ACHN (cell line): ENCODE measurements at regions of chr7 and their contacts with region 1.

Region 1: DNA sequence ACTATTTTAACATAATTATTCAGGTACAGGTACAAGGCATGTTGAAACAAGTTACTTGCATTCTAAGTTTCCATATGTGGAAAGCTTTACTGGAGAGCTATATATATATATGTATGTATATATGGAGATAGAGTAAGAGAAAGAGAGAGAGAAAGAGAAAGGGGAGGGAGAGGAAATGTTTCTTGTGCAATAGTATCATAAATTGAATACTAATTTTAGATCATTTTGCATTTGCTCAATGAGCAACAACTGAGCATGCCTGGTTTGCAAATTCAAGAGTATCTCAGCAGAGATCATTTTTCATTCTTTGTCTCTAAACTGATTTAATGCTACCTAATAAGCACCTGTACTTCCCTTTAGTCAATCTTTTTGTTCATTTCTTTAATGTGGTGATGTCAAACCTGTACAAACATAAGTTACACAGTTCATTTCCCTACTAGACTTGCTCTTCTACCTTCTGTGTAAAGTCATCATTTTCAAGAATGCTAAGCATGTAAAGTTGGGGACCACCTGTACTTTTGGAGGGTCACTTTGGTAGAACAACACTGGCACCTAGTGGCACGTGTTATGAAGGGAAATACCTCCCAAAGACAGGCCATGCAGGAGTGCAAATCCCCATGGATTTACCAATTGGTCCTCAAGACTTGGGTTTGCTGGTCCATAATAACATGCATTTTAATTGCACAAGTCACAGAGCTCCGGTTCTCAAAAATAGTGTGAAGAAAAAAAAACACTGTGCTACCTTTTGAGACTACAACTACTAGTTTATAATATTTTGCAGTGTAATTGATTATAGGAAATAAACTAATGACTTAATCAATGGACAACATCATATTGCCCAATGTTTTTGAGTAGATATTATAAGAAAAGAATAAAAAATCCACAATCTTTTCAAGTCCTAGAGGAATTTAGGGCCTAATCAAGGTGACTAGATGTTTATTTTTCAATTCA is 431.2 kb upstream of the IGFBP3 start:
- DNase-seq: peak; percentile 74

Region 2: DNA sequence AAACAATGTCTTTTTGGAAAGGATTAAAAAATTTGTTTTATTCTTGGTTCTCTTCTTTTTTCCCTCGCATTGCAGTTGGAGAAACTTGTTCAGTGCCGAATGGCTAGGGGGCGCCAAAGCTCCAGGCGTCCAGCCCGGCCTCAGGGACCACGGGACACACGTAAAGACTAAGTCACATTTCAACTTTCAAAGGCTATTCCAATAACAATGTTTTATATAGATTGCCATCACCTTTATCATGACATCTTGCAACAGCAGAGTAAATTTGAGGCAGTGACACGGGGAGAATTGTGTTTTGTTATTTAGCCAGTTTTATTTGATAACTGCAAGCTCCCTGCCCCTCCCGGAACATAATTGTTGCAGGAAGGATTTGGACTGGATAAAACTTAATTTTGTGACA is 429.0 kb before region 1 on chr7:
- in situ Hi-C with region 1: loop called (anchors 10 kb)
- DNase-seq: peak; percentile 77

Region 3: GRCh38 chr7:46282155-46282554 is 70.1 kb before region 1 on chr7:
- in situ Hi-C with region 1: no loop called
- DNase-seq: no peak

Region 4: DNA sequence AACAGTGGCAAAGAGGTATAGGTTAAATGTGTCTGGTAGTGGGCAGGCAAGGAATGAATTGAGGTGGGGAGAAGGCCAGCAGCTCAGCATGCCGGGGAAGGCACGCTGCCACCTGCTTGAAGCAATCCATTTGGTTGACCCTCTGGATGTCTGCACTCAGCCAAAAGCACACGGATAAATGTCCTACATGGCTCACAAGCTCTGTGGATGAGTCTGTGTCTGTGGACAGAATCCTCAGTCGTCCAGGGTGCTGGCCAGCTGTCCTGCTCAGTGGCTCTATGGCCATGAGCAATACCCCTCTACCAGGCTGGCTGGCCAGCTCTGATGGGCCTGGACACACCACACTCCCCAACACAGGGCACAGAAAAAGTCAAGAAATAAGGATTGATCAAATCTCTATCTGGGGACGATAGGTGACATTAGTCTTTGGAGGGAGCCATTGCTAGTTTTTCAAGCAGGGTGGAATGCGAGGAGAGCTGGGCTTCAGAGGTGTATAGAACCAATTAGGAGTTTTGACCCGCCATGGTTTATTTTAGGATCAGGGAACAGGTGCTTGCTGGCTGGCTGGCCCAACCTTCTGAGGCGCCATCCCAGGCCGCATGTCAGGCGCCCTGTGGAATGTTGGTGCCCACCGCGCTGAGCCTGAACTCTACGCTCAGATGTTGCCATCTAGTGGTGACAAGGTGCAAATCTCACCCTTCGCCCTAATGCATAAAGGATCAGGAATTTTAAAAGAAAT is 736.2 kb after region 1 on chr7:
- in situ Hi-C with region 1: loop called (anchors 25 kb)
- DNase-seq: peak; percentile 79

Region 5: DNA sequence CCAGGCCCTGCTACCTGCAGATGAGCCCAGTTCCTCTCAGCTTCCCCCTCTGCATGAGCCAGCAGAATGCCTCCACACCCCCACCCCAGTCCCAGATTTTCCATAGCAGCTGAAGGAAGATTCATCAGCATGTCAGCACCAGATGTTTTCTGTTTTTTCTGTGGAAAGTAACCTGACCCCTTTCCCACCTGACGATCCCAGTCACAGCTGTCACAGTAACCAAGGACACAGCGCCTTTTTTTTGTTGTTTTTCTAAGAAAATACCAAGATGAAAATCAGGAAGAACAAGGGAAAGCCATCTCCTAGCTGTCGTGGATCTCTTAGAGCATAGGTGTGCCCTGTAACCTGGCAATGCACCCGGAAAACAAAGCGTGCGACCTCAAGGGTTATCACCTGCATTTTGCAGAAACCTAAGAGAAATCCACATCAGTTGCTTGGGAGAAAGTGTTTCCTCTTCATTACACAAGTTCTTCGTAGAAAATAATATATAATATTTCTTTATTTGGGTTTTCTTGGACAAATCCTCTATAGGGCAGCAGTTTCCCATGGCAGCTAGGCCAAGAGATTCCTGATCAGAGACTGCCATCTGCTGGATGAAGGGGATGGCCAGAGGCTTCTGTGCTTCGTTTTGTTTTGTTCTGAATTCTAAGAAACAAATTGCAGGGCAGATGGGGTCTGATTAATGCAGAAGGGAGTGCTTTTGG is 827.7 kb after region 1 on chr7:
- in situ Hi-C with region 1: loop called (anchors 25 kb)
- DNase-seq: peak; percentile 78